Mammary epithelial cell (primary cell): ENCODE measurements at regions of chr1 and their contacts with region 1.

Region 1: DNA sequence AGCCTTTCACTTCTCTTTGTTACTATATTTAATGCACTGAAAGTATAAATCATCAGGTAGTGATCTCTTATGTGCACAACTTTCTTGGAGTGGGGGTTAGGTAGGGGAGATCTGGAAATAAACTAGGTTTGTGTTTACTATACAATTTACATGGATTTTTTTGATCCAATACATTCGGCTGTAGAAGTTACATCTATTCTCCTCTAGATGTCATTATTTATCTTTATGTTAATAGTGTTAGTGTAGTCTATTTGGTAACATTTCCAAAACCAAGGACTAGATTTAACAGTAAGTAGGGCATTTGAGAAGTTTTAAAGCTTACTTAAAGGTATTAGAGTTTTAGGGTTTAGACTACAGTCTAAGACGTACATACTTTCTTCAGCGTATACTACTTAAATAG is 5.4 kb downstream of the VPS45 start:
- DNase-seq: no peak
- H3K4me3 ChIP-seq: no peak overlapping the region
- H3K27ac ChIP-seq: no peak overlapping the region
- H3K4me1 ChIP-seq: peaks cover 5% of the 10 kb centered on the region
- H3K27me3 ChIP-seq: no peaks in the 10 kb centered on the region
- CTCF ChIP-seq: peak; percentile 33 to 35

Region 2: GRCh38 chr1:150168960-150169601 is 96.1 kb after region 1 on chr1:
- CTCF ChIA-PET with region 1: no interaction called
- dilution Hi-C with region 1: no loop called
- in situ Hi-C with region 1: loop called (anchors 5 to 10 kb)
- intact Hi-C with region 1: loop called (anchors 1 kb)
- DNase-seq: peak; percentile 24
- H3K4me3 ChIP-seq: no peak overlapping the region
- H3K27ac ChIP-seq: no peak overlapping the region
- H3K4me1 ChIP-seq: no peaks in the 10 kb centered on the region
- H3K27me3 ChIP-seq: no peaks in the 10 kb centered on the region
- CTCF ChIP-seq: peak; percentile 83 to 84

Region 3: GRCh38 chr1:150176593-150176992 is 103.6 kb after region 1 on chr1:
- CTCF ChIA-PET with region 1: no interaction called
- dilution Hi-C with region 1: no loop called
- in situ Hi-C with region 1: loop called in 1 of 2 experiments (anchors 10 kb)
- intact Hi-C with region 1: no loop called
- DNase-seq: no peak
- H3K4me3 ChIP-seq: no peak overlapping the region
- H3K27ac ChIP-seq: no peak overlapping the region
- H3K4me1 ChIP-seq: no peaks in the 10 kb centered on the region
- H3K27me3 ChIP-seq: no peaks in the 10 kb centered on the region
- CTCF ChIP-seq: no peak